ENCODE measurements at regions of chr15 and their contacts with region 1.

Region 1: GRCh38 chr15:72242775-72243370 is 11.9 kb upstream of the PKM start:
- DNase-seq: no peak
- H3K4me3 ChIP-seq: no peak overlapping the region
- H3K27ac ChIP-seq: no peak overlapping the region
- H3K4me1 ChIP-seq: peaks cover 3% of the 10 kb centered on the region
- H3K27me3 ChIP-seq: no peaks in the 10 kb centered on the region
- CTCF ChIP-seq: no peak
- POLR2A ChIP-seq: no peak

Region 2: DNA sequence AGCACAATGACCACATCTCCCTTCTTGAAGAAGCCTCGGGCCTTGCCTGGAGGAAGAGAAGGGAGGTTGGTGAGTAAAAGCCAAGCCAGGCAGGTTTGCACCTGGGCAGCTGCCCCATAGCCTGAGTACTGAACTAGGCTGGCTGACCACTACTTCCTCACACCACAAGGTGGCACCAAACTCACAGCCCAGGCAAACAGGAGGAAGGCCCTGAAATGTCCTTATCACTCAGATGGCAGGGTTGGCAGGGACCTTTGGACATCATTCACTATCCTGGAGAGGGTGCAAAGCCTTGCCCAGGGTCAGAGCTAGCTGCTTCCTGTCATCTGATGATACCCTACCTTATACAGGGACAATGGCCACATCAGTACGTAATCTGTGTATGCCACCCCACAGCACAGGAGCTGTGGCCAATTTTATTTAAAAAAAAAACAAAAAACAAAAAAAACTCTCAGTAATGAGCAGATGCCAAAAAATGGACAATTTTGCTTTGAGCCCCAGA is 43.1 kb before region 1 on chr15:
- intact Hi-C with region 1: no loop called
- DNase-seq: no peak
- H3K4me3 ChIP-seq: no peak overlapping the region
- H3K27ac ChIP-seq: no peak overlapping the region
- H3K4me1 ChIP-seq: peaks cover 26% of the 10 kb centered on the region
- H3K27me3 ChIP-seq: no peaks in the 10 kb centered on the region
- CTCF ChIP-seq: peak; percentile 77 to 88 (median 85)
- POLR2A ChIP-seq: no peak

Region 3: GRCh38 chr15:72265031-72265430 is 22.2 kb after region 1 on chr15:
- intact Hi-C with region 1: loop called (anchors 1 kb)
- DNase-seq: no peak
- H3K4me3 ChIP-seq: no peak overlapping the region
- H3K27ac ChIP-seq: no peak overlapping the region
- H3K4me1 ChIP-seq: peaks cover 8% of the 10 kb centered on the region
- H3K27me3 ChIP-seq: no peaks in the 10 kb centered on the region
- CTCF ChIP-seq: no peak
- POLR2A ChIP-seq: no peak

Region 4: GRCh38 chr15:72306211-72306785 is 63.4 kb after region 1 on chr15:
- intact Hi-C with region 1: no loop called
- DNase-seq: no peak
- H3K4me3 ChIP-seq: no peak overlapping the region
- H3K27ac ChIP-seq: no peak overlapping the region
- H3K4me1 ChIP-seq: no peaks in the 10 kb centered on the region
- H3K27me3 ChIP-seq: no peaks in the 10 kb centered on the region
- CTCF ChIP-seq: no peak
- POLR2A ChIP-seq: no peak

Measured in vagina (tissue), 2 donors.